Panc1 (cell line): ENCODE measurements at regions of chr15 and their contacts with region 1.

Region 1: DNA sequence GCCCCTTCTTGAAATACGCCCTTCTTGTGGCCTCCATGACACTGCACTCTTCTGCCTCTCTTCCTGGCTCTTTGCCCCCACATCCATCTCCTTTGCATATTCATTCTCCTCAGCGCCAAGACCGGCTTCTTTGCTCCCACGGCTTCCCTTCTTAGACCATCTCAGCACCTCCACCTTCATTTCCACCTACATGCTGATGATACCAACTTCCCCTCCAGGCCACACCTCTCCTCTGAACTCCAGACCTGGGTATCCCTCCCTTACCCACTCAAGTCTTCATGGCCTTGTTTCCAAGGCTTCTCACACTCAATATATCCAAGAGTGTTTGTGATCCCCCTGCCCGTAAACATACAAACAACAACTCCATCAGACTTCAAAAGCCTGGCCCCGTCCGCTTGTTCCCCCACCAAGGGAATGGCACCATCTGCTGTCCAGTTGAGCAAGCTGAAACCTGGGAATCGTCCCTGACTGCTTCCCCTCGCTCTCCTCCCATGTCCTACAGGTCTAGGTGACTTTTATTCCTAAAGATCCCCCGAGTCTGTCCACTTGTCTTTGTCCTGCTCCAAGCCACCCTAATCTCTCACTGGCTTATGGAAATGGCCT is 27.8 kb upstream of the FAM174B start:
- DNase-seq: peak; percentile 15
- ATAC-seq: peak; percentile 81; the same call in 1 of the 2 replicates
- H3K4me3 ChIP-seq: no peak overlapping the region
- H3K27ac ChIP-seq: no peak overlapping the region
- H3K4me1 ChIP-seq: 0 out of 2 replicates have a peak, but pooled peaks cover 5% of the 10 kb centered on the region
- H3K27me3 ChIP-seq: no peaks in the 10 kb centered on the region
- CTCF ChIP-seq: peak; percentile 79

Region 2: GRCh38 chr15:92521624-92522008 is 161.7 kb before region 1 on chr15:
- CTCF ChIA-PET with region 1: no interaction called
- POLR2A ChIA-PET with region 1: no interaction called
- in situ Hi-C with region 1: no loop called
- intact Hi-C with region 1: loop called (anchors 10 kb)
- DNase-seq: peak; percentile 47
- ATAC-seq: peak; percentile 98
- H3K4me3 ChIP-seq: no peak overlapping the region
- H3K27ac ChIP-seq: no peak overlapping the region
- H3K4me1 ChIP-seq: no peaks in the 10 kb centered on the region
- H3K27me3 ChIP-seq: no peaks in the 10 kb centered on the region
- CTCF ChIP-seq: peak; percentile 81

Region 3: GRCh38 chr15:92696096-92696495 is 12.8 kb after region 1 on chr15:
- CTCF ChIA-PET with region 1: interaction called, 12 read pairs
- POLR2A ChIA-PET with region 1: no interaction called
- in situ Hi-C with region 1: no loop called
- intact Hi-C with region 1: no loop called
- DNase-seq: no peak
- ATAC-seq: no peak
- H3K4me3 ChIP-seq: no peak overlapping the region
- H3K27ac ChIP-seq: no peak overlapping the region
- H3K4me1 ChIP-seq: peaks cover 5% of the 10 kb centered on the region; the same call in 1 of the 2 replicates
- H3K27me3 ChIP-seq: no peaks in the 10 kb centered on the region
- CTCF ChIP-seq: no peak